ENCODE measurements at regions of chr11 and their contacts with region 1.

Region 1: DNA sequence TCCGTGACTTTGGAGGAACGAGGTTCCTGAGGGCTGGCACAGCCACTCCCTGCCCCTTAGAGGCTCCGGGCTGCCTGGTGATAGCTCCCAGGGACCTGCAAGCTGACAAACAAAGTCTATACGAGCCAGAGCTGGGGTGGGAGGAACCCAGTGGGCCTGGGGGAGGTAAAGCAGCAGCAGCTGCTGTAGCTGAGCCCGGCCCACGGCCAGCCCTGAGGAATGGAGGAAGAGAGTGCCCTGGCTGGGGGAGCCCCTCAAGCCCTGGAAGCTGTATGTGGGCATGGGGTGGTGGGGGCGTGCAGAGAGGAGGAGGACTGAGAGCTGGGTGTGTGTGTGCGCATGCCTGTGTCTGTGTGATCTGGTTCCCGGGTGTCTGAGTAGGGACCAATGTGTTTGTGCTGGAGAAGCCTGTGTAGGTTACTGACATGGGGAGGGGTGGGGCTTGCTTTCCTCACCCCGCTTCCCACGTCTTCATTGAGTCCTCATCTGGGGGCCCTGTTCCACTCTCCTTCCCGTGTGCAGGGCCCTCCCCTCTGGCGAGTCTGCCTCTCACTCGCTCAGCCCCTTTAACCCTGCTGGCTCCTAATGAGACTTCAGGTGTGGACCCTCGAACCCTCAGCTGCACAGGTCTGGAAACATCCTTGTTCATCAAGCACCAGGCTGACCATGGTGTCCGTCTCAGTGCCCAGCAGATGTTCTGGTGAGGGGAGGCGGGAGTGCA is 10.7 kb downstream of the ST3GAL4 start:
- DNase-seq: no peak
- ATAC-seq: no peak; the same call in 1 of the 2 replicates
- H3K4me3 ChIP-seq: no peak overlapping the region
- H3K27ac ChIP-seq: peak overlapping the region; percentile 21
- H3K4me1 ChIP-seq: peaks cover 25% of the 10 kb centered on the region
- H3K27me3 ChIP-seq: no peaks in the 10 kb centered on the region
- CTCF ChIP-seq: no peak

Region 2: GRCh38 chr11:126257764-126258163 is 108.5 kb before region 1 on chr11:
- CTCF ChIA-PET with region 1: no interaction called
- POLR2A ChIA-PET with region 1: no interaction called
- intact Hi-C with region 1: no loop called
- DNase-seq: no peak
- ATAC-seq: peak; percentile 63
- H3K4me3 ChIP-seq: no peak overlapping the region
- H3K27ac ChIP-seq: no peak overlapping the region
- H3K4me1 ChIP-seq: no peaks in the 10 kb centered on the region
- H3K27me3 ChIP-seq: no peaks in the 10 kb centered on the region
- CTCF ChIP-seq: no peak

Region 3: GRCh38 chr11:126419801-126420697 is 53.8 kb after region 1 on chr11:
- CTCF ChIA-PET with region 1: no interaction called
- POLR2A ChIA-PET with region 1: no interaction called
- intact Hi-C with region 1: loop called (anchors 5 kb)
- DNase-seq: no peak
- ATAC-seq: no peak
- H3K4me3 ChIP-seq: no peak overlapping the region
- H3K27ac ChIP-seq: no peak overlapping the region
- H3K4me1 ChIP-seq: no peaks in the 10 kb centered on the region
- H3K27me3 ChIP-seq: no peaks in the 10 kb centered on the region
- CTCF ChIP-seq: no peak

Measured in PC-3 (cell line).